Left ventricle myocardium superior (tissue), 1 donor: ENCODE measurements at regions of chr15 and their contacts with region 1.

Region 1: GRCh38 chr15:58329846-58330671 is 101.7 kb upstream of the LIPC start:
- DNase-seq: peak; percentile 32
- ATAC-seq: no peak

Region 2: DNA sequence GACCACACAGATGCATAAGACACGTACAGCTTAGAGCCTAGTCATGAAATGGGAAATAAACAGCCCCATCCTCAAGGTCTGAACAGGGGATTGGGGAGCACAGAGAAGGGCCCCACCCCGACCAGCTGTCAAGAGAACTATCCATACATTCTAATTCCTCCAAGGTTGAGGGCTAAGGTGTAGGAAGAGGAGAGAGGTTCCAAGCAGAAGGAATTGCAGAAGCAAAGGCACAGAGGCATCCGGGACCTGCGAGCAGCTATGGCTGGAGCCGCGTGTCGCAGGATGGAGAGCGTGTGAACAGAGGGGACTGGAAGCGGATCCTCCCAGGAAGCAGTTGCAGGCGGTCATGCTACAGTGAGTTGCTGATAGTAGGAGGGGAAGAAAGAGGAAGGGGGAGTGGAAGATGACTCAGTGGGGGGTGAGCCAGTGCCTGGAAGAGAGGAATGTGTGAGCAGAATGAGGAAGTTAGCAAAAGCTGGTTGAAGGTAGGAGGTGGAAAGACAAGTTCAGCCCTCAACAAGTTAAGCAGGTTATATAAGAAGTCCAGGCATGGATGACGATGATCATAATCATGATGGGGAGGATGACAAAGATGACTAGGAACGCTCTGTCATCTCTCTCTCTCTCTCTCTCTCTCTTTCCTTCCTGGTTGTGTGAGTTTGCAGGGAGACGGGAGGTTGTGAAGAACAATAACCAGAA is 191.4 kb after region 1 on chr15:
- intact Hi-C with region 1: no loop called
- DNase-seq: no peak
- ATAC-seq: peak; percentile 31

Region 3: GRCh38 chr15:58535894-58536293 is 205.8 kb after region 1 on chr15:
- intact Hi-C with region 1: loop called (anchors 10 kb)
- DNase-seq: no peak
- ATAC-seq: no peak